ENCODE measurements at regions of chr1 and their contacts with region 1.

Region 1: DNA sequence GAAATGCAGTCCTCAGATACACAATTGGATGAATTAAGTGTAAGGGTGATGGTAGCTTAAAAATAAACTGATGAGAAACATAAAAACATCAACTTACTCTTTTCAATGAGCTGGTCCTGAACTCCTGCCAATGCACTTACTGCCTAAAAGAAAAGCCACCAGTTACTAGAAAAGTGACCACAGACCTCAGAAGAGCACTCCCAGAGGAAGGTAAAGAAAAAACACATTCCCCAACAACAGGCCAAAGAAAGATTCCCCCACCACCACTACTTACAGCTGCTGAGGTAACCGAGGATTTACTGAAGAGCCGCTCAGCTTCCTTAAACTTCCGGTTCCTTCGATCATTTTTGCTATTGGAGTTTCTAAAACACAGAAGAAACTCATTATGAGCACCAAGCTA is 5.4 kb downstream of the MEAF6 start:
- DNase-seq: peak; percentile 51
- ATAC-seq: peak; percentile 71
- H3K4me3 ChIP-seq: no peak overlapping the region
- H3K27ac ChIP-seq: no peak overlapping the region
- H3K4me1 ChIP-seq: no peaks in the 10 kb centered on the region
- H3K27me3 ChIP-seq: no peaks in the 10 kb centered on the region
- CTCF ChIP-seq: 0 out of 2 replicates have a peak, but pooled peaks have one; percentile 21
- POLR2A ChIP-seq: no peak
- RAD21 ChIP-seq: no peak

Region 2: DNA sequence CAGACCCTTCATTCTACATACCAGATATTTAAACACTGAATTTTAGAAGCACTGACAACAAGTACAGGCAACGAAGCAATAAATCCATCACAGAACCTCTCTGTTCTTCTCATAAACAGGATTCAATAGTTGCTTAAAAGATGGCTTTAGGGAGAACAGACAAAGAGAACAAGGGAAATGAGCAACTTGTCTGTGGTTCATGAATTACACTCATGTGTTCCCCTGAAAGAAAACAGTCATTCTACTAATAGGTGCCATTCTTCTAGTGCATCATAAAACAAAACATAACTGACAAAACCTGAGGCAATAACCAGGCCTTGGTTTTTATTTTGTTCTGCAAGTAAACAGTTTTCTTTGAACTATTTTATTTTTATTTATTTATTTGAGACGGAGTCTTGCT is 79.8 kb after region 1 on chr1:
- CTCF ChIA-PET with region 1: no interaction called
- POLR2A ChIA-PET with region 1: no interaction called
- dilution Hi-C with region 1: no loop called
- in situ Hi-C with region 1: no loop called
- intact Hi-C with region 1: loop called (anchors 5 kb)
- DNase-seq: no peak
- ATAC-seq: no peak
- H3K4me3 ChIP-seq: no peak overlapping the region
- H3K27ac ChIP-seq: no peak overlapping the region
- H3K4me1 ChIP-seq: no peaks in the 10 kb centered on the region; the same call in 1 of the 2 replicates
- H3K27me3 ChIP-seq: no peaks in the 10 kb centered on the region
- CTCF ChIP-seq: no peak
- POLR2A ChIP-seq: no peak
- RAD21 ChIP-seq: no peak

Measured in IMR-90 (cell line).